AG04449 (cell line): ENCODE measurements at regions of chr7 and their contacts with region 1.

Region 1: GRCh38 chr7:129644634-129645230 is 33.2 kb downstream of the NRF1 start:
- DNase-seq: no peak
- H3K4me3 ChIP-seq: no peak overlapping the region
- CTCF ChIP-seq: peak; percentile 14

Region 2: GRCh38 chr7:129343099-129343700 is 301.5 kb before region 1 on chr7:
- CTCF ChIA-PET with region 1: interaction called, 36 read pairs
- POLR2A ChIA-PET with region 1: no interaction called
- DNase-seq: no peak
- H3K4me3 ChIP-seq: no peak overlapping the region
- CTCF ChIP-seq: peak; percentile 48

Region 3: DNA sequence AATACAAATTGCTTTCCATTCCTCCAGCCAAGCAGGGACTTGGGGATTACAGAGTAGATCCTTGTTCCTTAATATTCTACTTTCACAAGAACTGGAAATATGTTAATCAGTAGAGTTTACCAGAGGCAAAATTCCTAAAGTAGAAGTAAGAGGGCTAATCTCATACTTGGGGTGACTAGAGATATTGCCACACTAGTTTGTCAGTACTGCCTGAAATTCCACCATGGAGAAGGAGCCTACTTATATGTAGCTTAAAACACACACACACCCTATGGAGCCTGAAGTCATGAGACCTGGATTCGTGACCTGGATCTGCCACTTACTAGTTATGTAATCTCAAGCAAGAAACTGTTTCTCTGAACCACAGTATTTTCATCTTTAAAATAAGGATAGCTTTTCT is 176.6 kb before region 1 on chr7:
- CTCF ChIA-PET with region 1: interaction called, 23 read pairs
- POLR2A ChIA-PET with region 1: no interaction called
- DNase-seq: peak; percentile 57
- H3K4me3 ChIP-seq: no peak overlapping the region
- CTCF ChIP-seq: no peak

Region 4: DNA sequence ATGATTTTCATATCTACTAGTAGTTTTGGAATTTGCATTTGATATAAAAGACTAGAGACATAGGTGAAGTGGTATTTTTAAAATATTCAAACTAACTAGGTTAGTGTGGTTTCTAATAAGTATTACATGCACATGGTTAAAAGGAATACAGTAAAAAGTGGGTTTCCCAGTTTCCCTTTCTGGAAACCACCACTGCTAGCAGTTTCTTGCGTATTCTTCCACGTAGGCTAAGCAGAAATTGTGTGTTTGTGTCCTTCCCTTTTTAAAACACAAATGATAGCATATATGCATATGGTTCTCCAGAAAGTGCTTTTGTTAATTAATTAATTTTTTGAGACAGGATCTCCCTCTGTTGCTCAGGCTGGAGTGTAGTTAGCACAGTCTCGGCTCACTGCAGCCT is 17.8 kb before region 1 on chr7:
- CTCF ChIA-PET with region 1: interaction called, 85 read pairs
- POLR2A ChIA-PET with region 1: no interaction called
- DNase-seq: no peak
- H3K4me3 ChIP-seq: no peak overlapping the region
- CTCF ChIP-seq: no peak

Region 5: DNA sequence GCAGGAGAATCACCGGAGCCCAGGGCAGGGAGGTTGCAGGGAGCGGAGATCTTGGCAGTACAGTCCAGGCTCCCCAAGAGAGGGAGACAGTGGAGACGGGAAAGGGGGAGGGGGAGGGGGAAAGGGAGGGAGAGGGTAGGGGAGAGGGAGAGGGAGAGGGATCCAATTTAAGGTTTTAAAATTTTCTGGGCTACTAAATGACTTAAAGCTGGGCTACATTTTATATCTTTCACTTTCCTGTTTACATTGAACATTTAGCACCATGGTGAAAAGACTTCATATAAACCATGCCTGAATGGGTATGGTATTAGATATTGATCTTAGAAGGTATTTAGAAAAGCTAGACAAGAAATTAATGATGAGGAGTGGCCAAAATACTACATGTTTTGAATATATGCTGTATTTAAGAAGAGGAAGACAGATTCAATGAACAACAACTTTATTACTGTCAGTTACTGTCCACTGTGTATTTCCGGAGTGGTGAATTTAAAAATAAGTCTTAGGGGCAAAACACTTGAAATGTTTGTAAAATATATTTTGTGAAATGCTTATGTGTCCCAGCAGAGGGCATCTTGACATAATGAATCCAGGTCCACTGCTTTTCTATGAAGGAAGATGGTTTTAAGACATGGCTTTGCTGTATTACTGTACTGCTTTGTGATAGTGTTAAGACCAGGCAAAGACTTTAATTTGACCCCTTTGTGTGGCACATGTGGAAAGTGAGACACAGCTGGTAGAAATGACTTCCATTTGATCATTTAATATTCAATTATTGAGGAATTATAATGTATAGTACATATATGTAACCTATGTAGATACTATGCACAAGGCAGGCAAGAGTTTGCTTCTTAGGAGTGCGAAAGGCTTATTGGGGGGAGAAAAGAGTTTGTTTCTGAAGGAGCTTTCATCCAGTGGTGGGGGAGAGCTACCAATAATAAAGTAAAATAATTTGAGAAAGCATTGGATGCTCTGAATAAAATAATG is 19.6 kb after region 1 on chr7:
- CTCF ChIA-PET with region 1: interaction called, 14 read pairs
- POLR2A ChIA-PET with region 1: no interaction called
- DNase-seq: peak; percentile 36
- H3K4me3 ChIP-seq: no peak overlapping the region
- CTCF ChIP-seq: peak; percentile 46

Region 6: GRCh38 chr7:129840757-129841156 is 196.0 kb after region 1 on chr7:
- CTCF ChIA-PET with region 1: no interaction called
- POLR2A ChIA-PET with region 1: no interaction called
- DNase-seq: no peak
- H3K4me3 ChIP-seq: no peak overlapping the region
- CTCF ChIP-seq: no peak